ENCODE measurements at regions of chr1 and their contacts with region 1.

Region 1: DNA sequence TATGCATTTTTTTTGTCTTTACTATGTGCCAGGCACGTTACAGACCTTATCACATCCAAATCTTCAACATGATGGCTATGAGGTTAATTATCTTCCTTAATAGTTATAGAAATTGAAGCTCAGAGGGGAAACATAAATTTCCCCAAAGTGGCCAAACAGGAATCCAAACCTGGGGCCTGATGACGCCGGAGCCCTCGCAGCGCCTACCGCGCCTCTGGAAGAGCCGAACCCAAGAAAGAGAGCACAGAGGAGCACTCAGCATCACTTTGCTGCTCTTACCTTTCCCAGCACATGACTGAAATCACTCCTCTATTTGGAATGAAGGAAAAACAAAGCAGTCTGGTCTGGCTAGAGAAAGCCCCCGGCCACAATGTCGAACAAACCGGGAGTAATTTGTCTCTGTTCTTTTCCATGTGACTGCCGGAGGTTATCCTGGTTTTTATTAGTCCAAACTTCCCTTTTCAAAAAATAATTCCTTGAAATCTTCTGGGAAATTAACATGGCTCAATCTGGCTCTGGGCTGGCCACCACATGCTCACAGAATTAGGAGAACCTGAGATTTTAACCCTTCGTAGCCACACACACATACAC is 195.5 kb downstream of the ADSS2 start:
- DNase-seq: peak; percentile 53
- H3K4me3 ChIP-seq: no peak overlapping the region
- H3K27ac ChIP-seq: peak overlapping the region in 1 of 2 experiments; percentile 67; a peak in 2 of 4 replicates
- H3K4me1 ChIP-seq: peaks cover 0 to 5% of the 10 kb centered on the region in 2 experiments; a peak in 1 of 4 replicates
- H3K27me3 ChIP-seq: no peaks in the 10 kb centered on the region
- CTCF ChIP-seq: no peak
- EP300 ChIP-seq: peak in 1 of 2 experiments; percentile 30; a peak in 1 of 4 replicates
- RAD21 ChIP-seq: peak; percentile 10; the same call in 1 of the 2 replicates

Region 2: GRCh38 chr1:244272471-244273261 is 16.5 kb after region 1 on chr1:
- CTCF ChIA-PET with region 1: interaction called, 10 read pairs
- POLR2A ChIA-PET with region 1: no interaction called
- DNase-seq: peak; percentile 76
- H3K4me3 ChIP-seq: peak overlapping the region in 1 of 2 experiments; percentile 58; a peak in 1 of 4 replicates
- H3K27ac ChIP-seq: peak overlapping the region; percentile 70 to 87
- H3K4me1 ChIP-seq: peaks cover 9 to 12% of the 10 kb centered on the region in 2 experiments
- H3K27me3 ChIP-seq: no peaks in the 10 kb centered on the region
- CTCF ChIP-seq: peak; percentile 100
- EP300 ChIP-seq: no peak
- RAD21 ChIP-seq: peak; percentile 100